Mammary epithelial cell (primary cell): ENCODE measurements at regions of chr16 and their contacts with region 1.

Region 1: DNA sequence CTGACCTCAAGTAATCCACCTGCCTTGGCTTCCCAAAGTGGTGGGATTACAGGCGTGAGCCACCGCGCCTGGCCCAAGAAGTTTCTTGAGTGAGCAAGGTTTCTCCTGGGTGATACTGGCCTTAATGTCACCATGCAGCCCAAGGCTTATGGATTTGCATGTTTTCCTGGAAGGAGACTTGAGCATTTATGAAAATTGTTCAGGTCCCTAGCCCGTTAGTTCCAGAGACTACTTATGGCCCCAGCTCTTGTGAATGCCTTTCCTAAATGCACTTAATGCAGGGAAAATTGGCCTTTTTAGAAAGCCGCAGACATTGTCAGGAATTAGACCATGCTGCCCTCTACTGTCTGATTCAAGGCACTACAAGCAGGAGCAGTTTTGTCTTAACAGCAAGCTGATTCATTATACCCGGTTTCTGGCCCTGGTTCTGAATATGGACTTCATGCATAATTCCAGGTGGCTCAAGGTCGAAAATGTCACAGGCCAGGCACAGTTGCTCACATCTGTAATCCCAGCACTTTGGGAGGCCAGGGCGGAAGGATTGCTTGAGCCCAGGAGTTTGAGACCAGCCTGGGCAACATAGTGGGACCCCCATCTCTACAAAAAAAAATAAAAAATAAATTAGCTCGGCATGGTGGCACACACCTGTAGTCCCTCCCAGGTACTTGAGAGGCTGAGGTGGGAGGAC is 91.3 kb downstream of the SNX29 start:
- DNase-seq: peak; percentile 50
- H3K4me3 ChIP-seq: no peak overlapping the region
- H3K27ac ChIP-seq: no peak overlapping the region
- H3K4me1 ChIP-seq: peaks cover 2% of the 10 kb centered on the region
- H3K27me3 ChIP-seq: no peaks in the 10 kb centered on the region
- CTCF ChIP-seq: peak; percentile 95 to 98

Region 2: DNA sequence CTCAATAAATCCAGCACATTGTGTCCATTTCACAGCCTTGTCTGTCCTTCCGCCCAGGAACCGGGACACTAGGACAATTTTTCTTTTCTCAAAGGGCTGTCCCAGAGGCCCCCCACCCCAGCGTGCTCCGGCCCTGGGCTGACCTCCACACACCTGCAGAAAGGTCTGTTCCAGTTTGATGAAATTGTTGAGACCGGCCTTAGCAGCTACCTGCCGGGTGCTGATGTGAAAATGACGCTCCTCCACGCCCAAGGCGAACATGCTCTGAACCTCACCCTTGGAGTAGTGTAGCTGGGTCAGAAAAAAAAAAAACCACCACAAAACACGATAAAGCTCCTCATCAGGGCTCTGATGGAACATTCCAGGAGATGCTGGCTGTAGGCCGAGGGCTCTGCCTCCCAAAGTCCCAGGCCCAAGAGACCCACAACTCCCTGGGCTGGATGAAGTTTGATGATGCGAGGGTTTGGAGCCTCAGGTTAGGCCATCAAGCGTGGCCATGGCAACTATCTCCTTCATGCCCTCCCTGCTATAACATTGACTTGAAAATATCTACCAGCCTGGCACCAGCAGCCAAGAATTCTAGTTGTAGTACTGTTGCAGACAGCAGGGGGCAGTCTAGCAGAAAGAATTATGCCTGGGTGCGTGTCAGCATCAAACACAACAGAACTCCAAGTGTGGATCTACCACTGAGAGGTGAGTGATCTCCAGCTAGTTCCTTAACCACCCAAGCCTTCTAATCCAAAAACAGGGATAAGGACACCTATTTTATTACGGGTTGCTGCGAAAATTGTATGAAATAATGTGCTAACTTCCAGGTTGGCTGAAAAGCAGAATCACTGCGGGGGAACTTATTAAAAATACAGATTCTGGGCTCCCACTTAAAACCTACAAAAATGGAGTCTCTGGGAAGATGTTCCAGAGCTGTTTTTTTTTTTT is 660.5 kb before region 1 on chr16:
- CTCF ChIA-PET with region 1: no interaction called
- dilution Hi-C with region 1: no loop called
- in situ Hi-C with region 1: loop called in 1 of 2 experiments (anchors 25 kb)
- intact Hi-C with region 1: no loop called
- DNase-seq: peak; percentile 65
- H3K4me3 ChIP-seq: no peak overlapping the region
- H3K27ac ChIP-seq: no peak overlapping the region
- H3K4me1 ChIP-seq: no peaks in the 10 kb centered on the region
- H3K27me3 ChIP-seq: no peaks in the 10 kb centered on the region
- CTCF ChIP-seq: peak; percentile 76 to 77

Region 3: GRCh38 chr16:11742539-11743307 is 325.1 kb before region 1 on chr16 and contains the start of gene TXNDC11:
- CTCF ChIA-PET with region 1: no interaction called
- dilution Hi-C with region 1: no loop called
- in situ Hi-C with region 1: no loop called
- intact Hi-C with region 1: loop called (anchors 5 kb)
- DNase-seq: peak; percentile 98
- H3K4me3 ChIP-seq: peak within 1 kb of the TSS; percentile 63 to 93 (median 88)
- H3K27ac ChIP-seq: peak within 1 kb of the TSS; percentile 85
- H3K4me1 ChIP-seq: peaks cover 18% of the 10 kb centered on the region
- H3K27me3 ChIP-seq: no peaks in the 10 kb centered on the region
- CTCF ChIP-seq: no peak
- total RNA-seq, gene TXNDC11: 26.0 to 30.7 TPM

Region 4: DNA sequence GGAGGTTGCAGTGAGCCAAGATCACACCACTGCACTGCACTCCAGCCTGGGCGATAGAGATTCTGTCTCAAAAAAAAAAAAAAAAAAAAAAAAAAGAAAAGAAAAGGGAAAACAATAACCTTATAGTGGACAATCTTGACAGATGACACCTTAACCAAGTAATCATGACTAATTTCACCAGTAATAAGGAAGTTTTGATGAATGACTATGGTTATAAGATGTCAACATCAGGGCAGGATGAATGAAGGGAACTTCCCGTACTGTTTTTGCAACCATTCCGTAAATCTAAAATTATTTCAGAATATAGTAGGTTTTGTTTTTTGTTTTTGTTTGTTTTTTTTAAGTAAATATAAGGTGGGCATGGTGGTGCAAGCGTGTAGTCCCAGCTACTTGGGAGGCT is 175.1 kb before region 1 on chr16:
- CTCF ChIA-PET with region 1: no interaction called
- dilution Hi-C with region 1: no loop called
- in situ Hi-C with region 1: no loop called
- intact Hi-C with region 1: loop called (anchors 5 kb)
- DNase-seq: no peak
- H3K4me3 ChIP-seq: no peak overlapping the region
- H3K27ac ChIP-seq: no peak overlapping the region
- H3K4me1 ChIP-seq: no peaks in the 10 kb centered on the region
- H3K27me3 ChIP-seq: no peaks in the 10 kb centered on the region
- CTCF ChIP-seq: no peak

Region 5: DNA sequence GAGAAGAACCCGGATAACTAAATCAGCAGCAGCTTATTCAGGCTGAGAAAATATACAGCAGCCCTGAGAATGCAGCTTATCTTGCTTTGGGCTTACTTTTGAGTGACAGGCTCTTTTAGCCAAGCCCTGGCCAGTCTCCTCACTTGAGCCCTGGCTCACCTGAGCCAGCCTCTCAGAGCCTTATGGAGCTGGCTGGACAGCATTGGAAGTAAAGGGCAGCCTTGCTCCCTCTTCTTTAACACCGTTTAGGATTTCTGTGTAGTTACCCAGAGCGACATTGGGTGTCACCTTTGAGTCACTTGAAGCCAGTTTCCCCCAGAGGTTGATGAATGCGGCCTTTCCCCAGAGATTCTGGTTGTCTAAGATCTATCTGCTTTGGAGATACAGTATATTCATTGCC is 118.3 kb before region 1 on chr16:
- CTCF ChIA-PET with region 1: interaction called, 5 read pairs
- dilution Hi-C with region 1: no loop called
- in situ Hi-C with region 1: no loop called
- intact Hi-C with region 1: loop called (anchors 2 kb)
- DNase-seq: peak; percentile 18
- H3K4me3 ChIP-seq: no peak overlapping the region
- H3K27ac ChIP-seq: no peak overlapping the region
- H3K4me1 ChIP-seq: no peaks in the 10 kb centered on the region
- H3K27me3 ChIP-seq: no peaks in the 10 kb centered on the region
- CTCF ChIP-seq: peak; percentile 42 to 56

Region 6: DNA sequence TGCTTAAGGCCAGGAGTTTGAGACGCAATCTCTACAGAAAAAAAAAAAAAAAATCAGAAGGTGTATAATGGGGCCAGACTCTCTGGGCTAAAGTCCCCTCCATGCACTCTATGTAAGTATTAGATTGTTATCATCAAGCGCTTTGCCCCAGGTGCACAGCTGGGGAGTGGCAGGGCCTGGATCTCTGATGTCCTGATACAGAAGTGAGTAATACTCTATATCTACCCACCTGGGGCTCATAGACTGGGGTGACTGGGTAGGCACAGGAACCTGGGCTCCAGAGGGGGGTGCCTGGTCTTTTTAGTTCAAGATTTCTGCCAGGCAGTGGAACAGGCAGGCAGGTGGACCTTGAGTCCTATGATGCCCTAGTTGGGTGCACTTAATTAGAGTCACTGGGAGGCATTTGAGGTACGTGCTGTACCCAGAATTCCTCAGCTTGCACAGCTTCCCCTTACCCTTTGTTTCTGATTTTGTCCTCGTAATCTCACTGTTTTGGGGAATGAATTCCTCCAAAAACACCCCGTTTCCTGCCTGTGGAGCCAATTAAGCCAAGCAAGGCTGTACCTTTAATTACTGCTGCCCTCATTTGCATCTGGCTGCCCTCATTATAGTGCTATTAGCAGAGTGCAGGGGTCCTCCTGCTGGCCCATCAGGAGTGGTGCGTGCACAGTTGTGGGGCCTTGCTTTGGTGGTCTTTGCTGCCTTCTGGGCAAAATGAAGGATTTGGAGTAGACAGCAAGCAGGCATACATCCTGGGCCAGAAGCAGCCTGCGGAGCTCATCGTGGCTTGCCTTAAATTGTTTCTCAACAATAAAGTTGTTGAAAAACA is 147.6 kb after region 1 on chr16:
- CTCF ChIA-PET with region 1: no interaction called
- dilution Hi-C with region 1: no loop called
- in situ Hi-C with region 1: no loop called
- intact Hi-C with region 1: no loop called
- DNase-seq: no peak
- H3K4me3 ChIP-seq: no peak overlapping the region
- H3K27ac ChIP-seq: no peak overlapping the region
- H3K4me1 ChIP-seq: no peaks in the 10 kb centered on the region
- H3K27me3 ChIP-seq: no peaks in the 10 kb centered on the region
- CTCF ChIP-seq: no peak

Region 7: DNA sequence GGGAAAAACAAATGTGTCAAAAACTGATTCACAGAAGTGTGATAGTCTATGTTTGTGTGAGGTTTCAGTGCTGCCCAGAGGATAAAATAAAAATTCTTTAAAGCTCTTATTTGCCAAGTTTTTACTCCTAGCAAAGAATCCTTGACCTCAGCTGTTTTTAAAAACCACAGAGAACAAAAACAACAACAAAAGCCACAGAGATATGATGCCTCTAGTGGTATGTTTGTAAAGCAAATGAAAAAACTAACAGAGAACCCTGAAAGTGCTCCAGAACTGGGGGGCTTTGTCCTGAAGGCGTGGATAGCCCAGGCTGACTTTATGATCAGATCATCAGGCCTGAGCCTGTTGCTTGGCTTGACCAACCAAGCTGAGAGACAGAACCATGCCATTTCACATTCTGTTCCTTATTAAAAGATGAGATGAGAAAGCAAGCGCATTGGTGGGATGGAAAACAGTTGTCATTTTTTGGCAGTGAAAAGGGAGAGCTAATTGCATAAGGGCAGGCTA is 324.8 kb after region 1 on chr16:
- CTCF ChIA-PET with region 1: no interaction called
- dilution Hi-C with region 1: no loop called
- in situ Hi-C with region 1: no loop called
- intact Hi-C with region 1: no loop called
- DNase-seq: no peak
- H3K4me3 ChIP-seq: no peak overlapping the region
- H3K27ac ChIP-seq: no peak overlapping the region
- H3K4me1 ChIP-seq: no peaks in the 10 kb centered on the region
- H3K27me3 ChIP-seq: no peaks in the 10 kb centered on the region
- CTCF ChIP-seq: no peak

Region 8: DNA sequence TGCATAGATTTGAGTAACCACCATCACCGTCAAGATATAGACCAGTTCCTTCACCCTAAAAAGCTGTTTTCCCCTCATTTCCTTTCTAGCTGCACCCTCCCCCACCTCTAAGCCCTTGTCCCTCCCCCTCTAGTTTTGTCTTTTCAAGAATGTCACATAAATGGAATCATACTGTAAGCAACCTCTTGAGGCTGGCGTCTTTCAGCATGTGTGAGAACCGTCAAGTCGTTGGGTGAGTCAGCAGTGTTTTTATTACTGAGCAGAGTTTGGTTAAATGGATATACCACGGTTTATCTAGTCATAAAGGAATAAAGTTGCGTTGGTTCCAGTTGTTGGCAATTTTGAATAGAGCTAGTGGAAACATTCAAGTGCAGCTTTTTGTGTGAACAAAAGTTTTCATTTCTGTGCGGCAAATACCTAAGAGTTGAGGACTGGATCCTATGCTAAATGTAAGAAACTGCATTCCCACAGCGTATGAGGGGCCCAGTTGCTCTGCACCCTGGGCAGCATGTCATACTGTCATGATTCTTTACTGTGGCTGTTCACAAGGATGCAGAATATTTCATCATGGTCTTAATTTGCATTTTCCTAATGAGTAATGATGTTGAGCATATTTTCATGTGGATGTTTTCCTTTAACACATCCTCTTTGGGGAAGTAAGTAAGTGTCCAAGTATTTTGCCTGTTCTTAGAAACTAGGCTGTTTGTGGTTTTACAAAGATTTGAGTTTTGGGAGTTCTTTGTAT is 471.5 kb after region 1 on chr16:
- CTCF ChIA-PET with region 1: no interaction called
- dilution Hi-C with region 1: no loop called
- in situ Hi-C with region 1: no loop called
- intact Hi-C with region 1: no loop called
- DNase-seq: peak; percentile 60
- H3K4me3 ChIP-seq: no peak overlapping the region
- H3K27ac ChIP-seq: no peak overlapping the region
- H3K4me1 ChIP-seq: peaks cover 10% of the 10 kb centered on the region
- H3K27me3 ChIP-seq: no peaks in the 10 kb centered on the region
- CTCF ChIP-seq: no peak